ENCODE measurements at regions of chr5 and their contacts with region 1.

Region 1: GRCh38 chr5:88268385-88269184 is at the start of gene TMEM161B:
- DNase-seq: peak; percentile 89
- ATAC-seq: peak; percentile 96
- H3K4me3 ChIP-seq: peak within 1 kb of the TSS; percentile 96
- H3K27ac ChIP-seq: peak within 1 kb of the TSS; percentile 91
- H3K4me1 ChIP-seq: peaks cover 3% of the 10 kb centered on the region; the same call in 1 of the 2 replicates
- H3K27me3 ChIP-seq: no peaks in the 10 kb centered on the region
- CTCF ChIP-seq: no peak
- EP300 ChIP-seq: no peak
- POLR2A ChIP-seq: peak; percentile 92
- RAD21 ChIP-seq: no peak
- polyA plus RNA-seq, gene TMEM161B: 23.0 to 30.0 TPM

Region 2: DNA sequence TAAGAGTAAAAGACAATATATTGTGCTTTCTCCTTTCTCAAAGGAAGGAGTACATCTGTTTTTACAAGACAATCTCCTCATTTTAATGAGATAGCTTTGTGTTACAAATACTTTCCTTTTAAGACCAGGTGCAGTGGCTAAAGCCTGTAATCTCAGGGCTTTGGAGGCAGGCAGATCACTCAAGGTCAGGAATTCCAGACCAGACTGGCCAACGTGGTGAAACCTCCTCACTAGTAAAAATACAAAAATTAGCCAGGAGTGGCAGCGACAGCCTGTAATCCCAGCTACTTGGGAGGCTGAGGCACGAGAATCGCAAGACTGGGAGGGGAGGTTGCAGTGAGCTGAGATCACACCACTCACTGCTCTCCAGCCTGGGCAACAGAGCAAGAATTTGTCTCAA is 11.7 kb before region 1 on chr5:
- CTCF ChIA-PET with region 1: interaction called, 3 read pairs
- POLR2A ChIA-PET with region 1: no interaction called
- RAD21 ChIA-PET with region 1: no interaction called
- SMC1A ChIA-PET with region 1: interaction called, 12 read pairs
- in situ Hi-C with region 1: no loop called
- intact Hi-C with region 1: no loop called
- DNase-seq: no peak
- ATAC-seq: no peak
- H3K4me3 ChIP-seq: no peak overlapping the region
- H3K27ac ChIP-seq: no peak overlapping the region
- H3K4me1 ChIP-seq: no peaks in the 10 kb centered on the region
- H3K27me3 ChIP-seq: no peaks in the 10 kb centered on the region
- CTCF ChIP-seq: no peak
- EP300 ChIP-seq: no peak
- POLR2A ChIP-seq: no peak
- RAD21 ChIP-seq: no peak

Measured in GM12878 (cell line).